BJ (cell line): ENCODE measurements at regions of chr4 and their contacts with region 1.

Region 1: DNA sequence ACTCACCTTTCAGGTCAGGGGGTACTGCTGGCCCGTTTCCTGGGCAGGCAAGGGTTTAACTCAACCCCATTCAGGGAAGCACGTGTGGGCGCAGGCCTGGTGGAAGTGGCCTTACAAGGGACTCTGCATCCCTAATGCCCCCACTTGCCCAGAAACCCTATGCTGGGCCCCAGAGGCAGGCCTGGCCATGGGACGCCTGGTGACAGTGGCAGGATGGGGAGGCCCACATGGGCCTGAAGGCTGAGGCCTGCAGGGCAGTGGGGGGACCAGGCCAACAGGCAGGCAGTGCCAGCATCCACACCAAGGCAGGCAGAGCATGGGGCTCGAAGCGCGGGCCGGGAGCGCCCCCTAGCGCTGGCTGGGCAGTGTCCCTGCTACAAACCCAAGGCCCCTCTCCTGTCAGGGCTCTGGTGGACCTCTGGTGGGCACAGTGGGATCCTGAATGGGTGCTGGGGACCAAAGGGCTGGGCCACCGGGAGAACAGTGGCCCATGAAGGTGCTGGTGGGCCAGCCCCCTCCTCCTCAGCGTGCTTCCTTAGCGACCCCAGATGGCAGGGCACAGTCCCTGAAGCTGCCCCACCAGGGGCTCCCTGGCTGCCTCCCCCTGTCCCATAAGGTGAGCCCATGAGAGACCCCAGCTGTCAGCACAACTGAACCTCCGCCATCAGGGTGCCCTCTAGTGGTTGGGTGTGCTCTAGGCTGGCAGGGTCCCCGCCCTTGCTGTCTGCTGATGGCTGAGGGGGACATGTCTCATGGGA is 16.8 kb downstream of the FGFR3 start:
- DNase-seq: no peak
- H3K4me3 ChIP-seq: no peak overlapping the region
- H3K27me3 ChIP-seq: no peaks in the 10 kb centered on the region
- CTCF ChIP-seq: peak; percentile 93

Region 2: GRCh38 chr4:1746265-1746691 is 63.7 kb before region 1 on chr4:
- CTCF ChIA-PET with region 1: interaction called, 148 read pairs
- POLR2A ChIA-PET with region 1: no interaction called
- DNase-seq: no peak
- H3K4me3 ChIP-seq: no peak overlapping the region
- H3K27me3 ChIP-seq: no peaks in the 10 kb centered on the region
- CTCF ChIP-seq: peak; percentile 94

Region 3: DNA sequence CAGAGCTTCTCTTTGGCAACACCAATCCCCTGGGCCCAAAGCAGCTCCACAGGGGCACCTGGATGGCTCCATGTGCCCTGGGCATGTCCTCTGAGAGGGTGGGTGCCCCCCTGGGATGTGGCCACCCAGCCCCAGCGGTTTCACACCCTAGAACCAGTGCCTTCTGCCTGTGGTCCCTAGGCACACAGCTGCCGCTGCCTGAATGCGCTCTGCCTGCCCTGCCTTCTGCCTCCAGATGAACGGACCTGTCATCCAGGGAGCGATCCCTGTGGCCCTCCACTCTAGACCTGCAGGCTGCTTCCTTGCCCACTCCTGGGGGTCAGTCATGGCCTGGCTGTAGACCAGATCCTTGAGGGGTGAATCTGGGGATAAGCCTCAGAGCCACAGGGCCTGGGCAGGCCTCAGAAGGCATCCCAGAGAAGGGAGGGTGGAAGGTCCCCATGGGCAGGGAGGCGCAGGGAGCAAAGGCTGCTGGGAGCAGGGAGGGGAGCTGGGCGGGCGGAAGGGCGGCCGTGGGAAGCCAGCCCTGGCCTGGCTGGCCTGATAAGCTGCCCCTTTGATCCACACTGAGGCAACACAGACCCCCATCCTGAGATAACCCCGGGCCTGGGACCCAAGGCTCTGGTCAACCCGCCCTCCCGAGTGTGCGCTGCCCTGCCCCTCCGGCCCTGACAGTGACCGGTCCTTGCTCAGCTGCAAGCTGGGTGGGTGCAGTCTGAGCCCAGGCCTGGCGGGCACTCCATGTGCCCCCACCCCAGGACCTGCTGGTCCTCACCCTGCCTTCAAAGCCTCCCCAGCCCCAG is 24.9 kb before region 1 on chr4:
- CTCF ChIA-PET with region 1: interaction called, 10 read pairs
- POLR2A ChIA-PET with region 1: no interaction called
- DNase-seq: no peak
- H3K4me3 ChIP-seq: no peak overlapping the region
- H3K27me3 ChIP-seq: peaks cover 2% of the 10 kb centered on the region; the same call in 1 of the 2 replicates
- CTCF ChIP-seq: no peak

Region 4: DNA sequence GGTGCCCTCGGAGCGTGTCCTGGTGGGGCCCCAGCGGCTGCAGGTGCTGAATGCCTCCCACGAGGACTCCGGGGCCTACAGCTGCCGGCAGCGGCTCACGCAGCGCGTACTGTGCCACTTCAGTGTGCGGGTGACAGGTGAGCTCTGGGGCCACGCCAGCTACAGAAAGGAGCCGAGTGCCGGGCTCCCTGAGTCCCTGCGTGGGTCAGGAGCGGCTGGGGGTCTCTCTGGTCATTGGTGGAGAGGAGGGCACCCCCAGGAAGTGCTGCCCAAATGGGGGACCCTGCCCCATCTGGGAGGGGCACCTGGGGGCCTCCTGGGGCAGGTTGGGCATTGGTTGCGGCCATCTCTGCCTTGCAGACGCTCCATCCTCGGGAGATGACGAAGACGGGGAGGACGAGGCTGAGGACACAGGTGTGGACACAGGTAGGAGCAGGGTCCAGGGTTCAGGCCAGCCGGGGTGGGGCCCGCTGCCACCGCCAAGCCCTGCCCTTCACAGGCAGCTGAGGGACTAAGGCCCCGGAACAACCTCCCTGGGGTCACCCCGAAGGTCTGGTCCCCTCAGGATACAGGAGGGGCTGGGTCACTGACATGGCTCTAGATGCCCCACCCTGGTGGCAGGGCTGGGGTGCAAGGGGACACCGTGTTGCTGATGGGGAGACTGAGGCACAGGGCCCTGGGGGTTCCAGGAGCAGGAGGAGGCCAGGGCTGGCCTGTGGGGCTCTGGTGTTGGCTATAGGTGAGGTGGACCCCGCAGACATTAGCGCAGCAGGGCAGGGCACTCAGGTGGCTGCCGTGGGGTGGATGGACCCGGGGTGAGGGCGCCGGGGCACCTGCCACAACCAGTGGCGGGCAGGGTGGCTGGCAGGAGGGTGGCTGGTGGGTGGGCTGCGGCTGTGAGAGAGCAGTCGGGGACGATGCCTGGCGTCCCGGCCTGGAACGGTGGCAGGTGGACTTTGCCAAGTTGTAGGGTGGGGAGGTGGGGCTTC is 10.3 kb before region 1 on chr4:
- CTCF ChIA-PET with region 1: interaction called, 15 read pairs
- POLR2A ChIA-PET with region 1: no interaction called
- DNase-seq: no peak
- H3K4me3 ChIP-seq: no peak overlapping the region
- H3K27me3 ChIP-seq: peaks cover 11% of the 10 kb centered on the region
- CTCF ChIP-seq: no peak